ENCODE measurements at regions of chrX and their contacts with region 1.

Region 1: GRCh38 chrX:16882702-16883486 is 12.7 kb upstream of the RBBP7 start:
- DNase-seq: peak; percentile 79
- H3K4me3 Mint-ChIP-seq: peak overlapping the region; percentile 69
- H3K27ac Mint-ChIP-seq: peak overlapping the region; percentile 51
- H3K4me1 Mint-ChIP-seq: peaks cover 3% of the 10 kb centered on the region
- H3K27me3 Mint-ChIP-seq: peaks cover 2% of the 10 kb centered on the region

Region 2: GRCh38 chrX:16946361-16946964 is 63.6 kb after region 1 on chrX and contains the start of gene REPS2:
- CTCF ChIA-PET with region 1: interaction called, 4 read pairs
- POLR2A ChIA-PET with region 1: no interaction called
- intact Hi-C with region 1: loop called (anchors 5 kb)
- DNase-seq: peak; percentile 85
- H3K4me3 Mint-ChIP-seq: peak within 1 kb of the TSS; percentile 69
- H3K27ac Mint-ChIP-seq: no peak within 1 kb of the TSS
- H3K4me1 Mint-ChIP-seq: no peaks in the 10 kb centered on the region
- H3K27me3 Mint-ChIP-seq: no peaks in the 10 kb centered on the region
- total RNA-seq, gene REPS2: not detected

Region 3: GRCh38 chrX:17046478-17047097 is 163.7 kb after region 1 on chrX:
- CTCF ChIA-PET with region 1: interaction called, 53 read pairs
- POLR2A ChIA-PET with region 1: no interaction called
- intact Hi-C with region 1: loop called (anchors 1 kb)
- DNase-seq: peak; percentile 48
- H3K4me3 Mint-ChIP-seq: no peak overlapping the region
- H3K27ac Mint-ChIP-seq: no peak overlapping the region
- H3K4me1 Mint-ChIP-seq: no peaks in the 10 kb centered on the region
- H3K27me3 Mint-ChIP-seq: no peaks in the 10 kb centered on the region

Measured in activated CD4-positive, alpha-beta memory T cell treated with anti-CD3 and anti-CD28 coated beads for 36 hours (primary cell).